ENCODE measurements at regions of chr12 and their contacts with region 1.

Region 1: GRCh38 chr12:96399919-96400797 is at the start of gene CDK17:
- DNase-seq: peak; percentile 20 to 91
- H3K4me3 ChIP-seq: peak within 1 kb of the TSS; percentile 78 to 82
- H3K27ac ChIP-seq: peak within 1 kb of the TSS; percentile 100
- H3K4me1 ChIP-seq: peaks cover 0 to 17% of the 10 kb centered on the region in 2 donors
- H3K27me3 ChIP-seq: no peaks in the 10 kb centered on the region
- CTCF ChIP-seq: peak; percentile 24 to 39 (median 34)
- total RNA-seq, gene CDK17: 49.7 TPM

Region 2: GRCh38 chr12:96035278-96036236 is 364.6 kb before region 1 on chr12 and contains the start of gene LTA4H:
- intact Hi-C with region 1: loop called (anchors 2 kb)
- DNase-seq: peak; percentile 93 to 99
- H3K4me3 ChIP-seq: peak within 1 kb of the TSS; percentile 77 to 83
- H3K27ac ChIP-seq: peak within 1 kb of the TSS; percentile 78 to 93
- H3K4me1 ChIP-seq: peaks cover 0 to 13% of the 10 kb centered on the region in 2 donors
- H3K27me3 ChIP-seq: no peaks in the 10 kb centered on the region
- CTCF ChIP-seq: no peak
- total RNA-seq, gene LTA4H: 47.3 TPM

Region 3: DNA sequence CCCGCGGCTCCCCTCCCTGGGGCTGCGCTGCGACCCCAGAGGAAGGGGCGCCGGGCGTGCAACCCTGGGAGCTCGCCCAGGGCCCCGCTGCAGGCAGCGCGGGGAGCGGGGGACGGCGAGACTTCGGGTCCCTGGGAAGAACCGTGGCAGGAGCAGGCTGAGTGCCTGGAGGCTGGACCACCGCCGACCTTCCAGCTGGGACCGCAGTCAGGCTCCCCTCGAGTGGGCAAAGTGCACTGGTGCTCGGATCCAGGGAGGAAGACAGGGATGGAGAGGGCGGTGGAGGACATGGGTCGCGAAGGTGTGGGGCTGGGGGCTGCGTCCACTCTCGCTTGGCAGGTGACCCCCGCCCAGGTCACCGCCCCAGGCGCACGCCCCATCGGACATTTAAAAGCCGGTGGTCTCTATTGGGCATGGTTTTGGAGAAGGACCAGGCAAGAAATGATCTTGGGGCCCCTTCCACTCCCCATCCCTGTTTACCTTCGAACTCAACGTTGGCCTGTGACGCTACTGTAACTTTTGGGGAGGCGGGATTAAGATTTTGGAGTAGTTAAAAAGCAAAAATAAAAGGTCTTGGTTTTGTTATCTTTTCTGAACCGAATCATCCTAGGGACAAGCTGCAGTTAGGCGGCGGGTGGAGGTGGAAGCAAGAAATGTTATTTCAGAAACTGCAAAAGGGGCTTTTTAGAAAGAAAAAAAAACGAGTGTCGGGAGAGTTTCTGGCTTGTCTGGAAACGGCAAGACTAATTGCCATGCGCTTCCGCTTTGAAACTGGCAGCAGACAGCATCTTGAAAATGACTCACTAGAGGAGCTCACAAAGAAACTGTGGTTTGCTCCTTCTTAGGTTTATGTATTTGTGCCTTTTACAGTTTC is 204.9 kb before region 1 on chr12:
- intact Hi-C with region 1: loop called (anchors 2 kb)
- DNase-seq: peak; percentile 31 to 81
- H3K4me3 ChIP-seq: peak overlapping the region; percentile 85 to 95
- H3K27ac ChIP-seq: peak overlapping the region; percentile 72 to 77
- H3K4me1 ChIP-seq: peaks cover 5 to 22% of the 10 kb centered on the region in 2 donors
- H3K27me3 ChIP-seq: no peaks in the 10 kb centered on the region
- CTCF ChIP-seq: no peak

Region 4: GRCh38 chr12:96237465-96238077 is 162.6 kb before region 1 on chr12:
- intact Hi-C with region 1: loop called (anchors 2 kb)
- DNase-seq: peak in 1 of 2 donors; percentile 90
- H3K4me3 ChIP-seq: peak overlapping the region in 1 of 2 donors; percentile 12
- H3K27ac ChIP-seq: peak overlapping the region; percentile 69 to 78
- H3K4me1 ChIP-seq: peaks cover 25 to 39% of the 10 kb centered on the region in 2 donors
- H3K27me3 ChIP-seq: no peaks in the 10 kb centered on the region
- CTCF ChIP-seq: no peak

Region 5: GRCh38 chr12:96427269-96427729 is 27.1 kb after region 1 on chr12:
- intact Hi-C with region 1: no loop called
- DNase-seq: peak in 1 of 2 donors; percentile 82
- H3K4me3 ChIP-seq: no peak overlapping the region
- H3K27ac ChIP-seq: peak overlapping the region; percentile 32 to 48
- H3K4me1 ChIP-seq: no peaks in the 10 kb centered on the region
- H3K27me3 ChIP-seq: no peaks in the 10 kb centered on the region
- CTCF ChIP-seq: no peak

Region 6: GRCh38 chr12:96473394-96474093 is 73.4 kb after region 1 on chr12:
- intact Hi-C with region 1: no loop called
- DNase-seq: no peak
- H3K4me3 ChIP-seq: no peak overlapping the region
- H3K27ac ChIP-seq: no peak overlapping the region
- H3K4me1 ChIP-seq: no peaks in the 10 kb centered on the region
- H3K27me3 ChIP-seq: no peaks in the 10 kb centered on the region
- CTCF ChIP-seq: no peak

Region 7: GRCh38 chr12:96489103-96490056 is 89.2 kb after region 1 on chr12 and contains the start of gene CFAP54:
- intact Hi-C with region 1: loop called (anchors 1 kb)
- DNase-seq: peak; percentile 76 to 97
- H3K4me3 ChIP-seq: peak within 1 kb of the TSS; percentile 56 to 82
- H3K27ac ChIP-seq: peak within 1 kb of the TSS; percentile 21 to 55
- H3K4me1 ChIP-seq: peaks cover 2 to 5% of the 10 kb centered on the region in 2 donors
- H3K27me3 ChIP-seq: no peaks in the 10 kb centered on the region
- CTCF ChIP-seq: peak; percentile 86 to 93 (median 89)
- total RNA-seq, gene CFAP54: not detected

Region 8: DNA sequence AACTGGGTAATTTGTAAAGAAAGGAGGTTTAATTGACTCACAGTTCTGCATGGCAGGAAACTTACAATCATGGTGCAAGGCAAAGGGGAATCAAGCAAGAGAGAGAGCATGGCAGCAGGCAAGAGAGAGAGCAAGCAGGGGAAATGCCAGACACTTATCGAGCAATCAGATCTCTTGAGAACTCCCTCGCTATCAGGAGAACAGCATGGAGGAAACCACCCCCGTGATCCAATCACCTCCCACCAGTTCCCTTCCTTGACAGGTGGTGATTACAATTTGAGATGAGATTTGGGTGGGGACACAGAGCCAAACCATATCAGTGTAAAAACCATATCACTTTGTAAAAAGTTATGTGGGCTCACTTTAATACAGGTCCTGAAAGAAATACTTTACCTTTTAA is 450.5 kb after region 1 on chr12:
- intact Hi-C with region 1: no loop called
- DNase-seq: no peak
- H3K4me3 ChIP-seq: no peak overlapping the region
- H3K27ac ChIP-seq: no peak overlapping the region
- H3K4me1 ChIP-seq: no peaks in the 10 kb centered on the region
- H3K27me3 ChIP-seq: no peaks in the 10 kb centered on the region
- CTCF ChIP-seq: no peak

Region 9: DNA sequence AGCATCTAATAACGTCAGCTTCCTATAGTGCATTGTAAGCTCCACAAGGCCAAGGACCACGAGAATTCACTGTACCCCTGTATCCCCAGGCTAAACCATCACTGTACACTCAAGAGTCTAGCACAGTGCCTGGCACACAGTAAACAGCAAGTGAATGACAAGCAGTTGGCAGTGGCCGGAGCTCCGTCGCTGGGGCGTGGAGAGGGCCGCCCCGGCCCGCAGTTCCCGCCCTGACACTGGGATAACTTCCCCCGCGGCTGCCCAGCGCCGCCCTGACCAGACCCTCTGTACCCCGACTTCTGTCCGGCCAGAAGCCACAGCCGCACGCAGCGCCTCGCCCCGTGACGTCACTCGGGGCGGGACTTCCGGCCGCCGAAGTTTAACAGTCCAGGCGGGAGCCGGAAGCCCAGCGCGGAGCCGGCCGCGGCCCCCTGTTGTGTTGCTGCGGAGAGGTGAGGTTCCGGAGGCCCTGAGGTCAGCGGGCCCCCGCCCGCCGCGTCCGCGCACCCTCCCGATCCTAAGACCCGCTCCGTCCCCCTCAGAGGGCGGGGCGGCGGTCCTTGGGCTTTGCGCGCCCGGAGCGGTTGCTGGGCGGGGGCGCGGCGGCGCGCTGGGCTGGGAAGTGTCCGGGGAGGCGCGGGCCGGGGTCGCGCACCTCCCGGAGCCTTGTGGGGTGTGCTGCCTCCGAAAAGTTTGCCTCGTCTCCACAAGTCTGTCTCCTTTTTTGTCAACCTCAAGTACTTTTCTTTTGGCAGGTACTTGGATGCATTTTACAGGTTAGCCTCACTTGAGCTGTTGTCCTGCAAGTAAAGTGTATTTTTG is 506.9 kb after region 1 on chr12 and contains the start of gene NEDD1:
- intact Hi-C with region 1: loop called (anchors 5 kb)
- DNase-seq: peak; percentile 18 to 92
- H3K4me3 ChIP-seq: peak within 1 kb of the TSS; percentile 81 to 89
- H3K27ac ChIP-seq: peak within 1 kb of the TSS; percentile 66 to 82
- H3K4me1 ChIP-seq: peaks cover 0 to 3% of the 10 kb centered on the region in 2 donors
- H3K27me3 ChIP-seq: no peaks in the 10 kb centered on the region
- CTCF ChIP-seq: no peak
- total RNA-seq, gene NEDD1: 31.1 TPM

Measured in ascending aorta (tissue), 2 donors.